AG04449 (cell line): ENCODE measurements at regions of chr3 and their contacts with region 1.

Region 1: DNA sequence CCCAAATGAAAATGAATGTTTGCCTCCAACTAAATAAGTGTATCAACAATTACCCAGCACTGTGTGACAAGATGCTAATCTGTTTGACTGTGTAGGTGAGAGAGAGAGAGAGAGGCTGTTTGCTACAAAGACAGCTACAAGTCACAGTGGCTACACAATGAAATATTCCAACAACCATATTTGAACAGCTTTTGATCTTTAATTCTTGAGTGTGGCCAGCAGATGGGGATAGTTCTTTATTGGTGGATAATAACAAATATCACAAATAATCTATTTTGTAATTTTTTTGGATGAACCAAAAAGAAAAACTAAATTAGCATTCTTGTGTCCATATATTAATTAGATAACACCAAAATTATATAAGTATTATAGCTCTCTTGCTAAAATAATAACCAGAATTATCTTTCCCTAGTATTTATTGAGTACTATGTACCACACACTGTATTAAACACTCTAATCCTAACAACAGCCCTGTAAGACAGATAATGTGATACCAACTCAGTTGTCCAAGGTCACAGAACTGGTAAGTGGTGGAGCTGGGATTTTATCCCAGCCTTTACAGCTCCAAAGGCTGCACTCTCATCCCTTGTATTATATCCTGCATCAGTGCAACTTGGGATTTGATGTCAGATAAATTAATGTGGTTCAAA is 61.9 kb upstream of the C3orf80 start:
- DNase-seq: no peak
- H3K4me3 ChIP-seq: no peak overlapping the region
- CTCF ChIP-seq: peak; percentile 14

Region 2: GRCh38 chr3:160078533-160078932 is 84.8 kb before region 1 on chr3:
- CTCF ChIA-PET with region 1: no interaction called
- POLR2A ChIA-PET with region 1: no interaction called
- DNase-seq: no peak
- H3K4me3 ChIP-seq: no peak overlapping the region
- CTCF ChIP-seq: no peak

Region 3: DNA sequence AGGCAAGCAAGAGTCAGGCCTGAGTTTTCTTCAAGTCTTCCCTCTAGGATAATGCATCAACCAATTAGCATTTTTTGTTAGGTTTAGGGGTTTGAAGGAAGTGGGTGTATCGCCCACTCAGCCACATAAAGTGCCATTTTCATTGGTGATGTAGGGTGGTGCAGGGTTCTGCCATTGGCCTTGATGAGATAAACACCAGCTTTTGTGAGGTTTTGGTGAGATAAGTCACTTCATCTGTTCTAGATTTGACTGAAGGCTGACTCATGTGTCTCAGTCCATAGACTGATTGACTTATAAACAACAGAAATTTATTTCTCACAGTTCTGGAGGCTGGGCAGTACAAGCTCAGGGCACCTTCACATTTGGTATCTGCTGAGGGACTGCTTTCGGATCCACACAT is 22.6 kb before region 1 on chr3:
- CTCF ChIA-PET with region 1: interaction called, 10 read pairs
- POLR2A ChIA-PET with region 1: no interaction called
- DNase-seq: no peak
- H3K4me3 ChIP-seq: no peak overlapping the region
- CTCF ChIP-seq: no peak

Region 4: GRCh38 chr3:160187288-160187687 is 23.9 kb after region 1 on chr3:
- CTCF ChIA-PET with region 1: interaction called, 12 read pairs
- POLR2A ChIA-PET with region 1: no interaction called
- DNase-seq: no peak
- H3K4me3 ChIP-seq: no peak overlapping the region
- CTCF ChIP-seq: no peak

Region 5: DNA sequence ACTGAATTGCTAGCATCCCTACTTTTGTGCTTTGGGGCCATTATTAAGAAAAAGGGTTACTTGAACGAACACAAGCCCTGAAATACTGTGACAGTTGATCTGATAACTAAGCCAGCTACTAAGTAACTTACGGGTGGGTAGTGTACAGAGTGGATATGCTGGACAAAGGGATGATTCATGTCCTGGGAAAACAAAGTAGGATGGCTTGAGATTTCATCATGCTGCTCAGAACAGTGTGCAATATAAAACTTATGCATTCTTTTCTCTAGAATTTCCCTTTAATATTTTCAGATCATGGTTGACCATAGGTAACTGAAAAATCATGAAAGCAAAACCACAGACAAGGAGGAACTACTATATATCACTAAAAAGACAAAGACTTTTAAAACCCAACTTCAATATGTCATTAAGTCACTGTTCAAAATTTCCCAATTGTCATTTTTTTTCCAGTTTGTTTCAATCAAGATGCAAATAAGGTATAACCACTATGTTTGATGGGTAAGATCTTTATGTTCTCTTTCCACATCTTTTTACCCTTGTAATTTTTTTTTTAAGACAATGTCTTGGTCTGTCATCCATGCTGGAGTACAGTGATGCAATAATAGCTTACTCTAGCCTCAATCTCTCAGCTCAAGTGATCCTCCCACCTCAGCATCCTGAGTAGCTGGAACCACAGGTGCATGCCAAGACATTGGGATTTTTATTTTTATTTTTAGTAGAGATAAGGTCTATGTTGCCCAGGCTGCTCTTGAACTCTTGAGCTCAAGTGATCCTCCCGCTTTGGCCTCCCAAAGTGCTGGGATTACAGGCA is 168.0 kb after region 1 on chr3:
- CTCF ChIA-PET with region 1: interaction called, 14 read pairs
- POLR2A ChIA-PET with region 1: no interaction called
- DNase-seq: peak; percentile 69
- H3K4me3 ChIP-seq: no peak overlapping the region
- CTCF ChIP-seq: no peak

Region 6: GRCh38 chr3:160355826-160356225 is 192.5 kb after region 1 on chr3:
- CTCF ChIA-PET with region 1: interaction called, 12 read pairs
- POLR2A ChIA-PET with region 1: no interaction called
- DNase-seq: no peak
- H3K4me3 ChIP-seq: no peak overlapping the region
- CTCF ChIP-seq: no peak